PC-3 (cell line): ENCODE measurements at regions of chr2 and their contacts with region 1.

Region 1: DNA sequence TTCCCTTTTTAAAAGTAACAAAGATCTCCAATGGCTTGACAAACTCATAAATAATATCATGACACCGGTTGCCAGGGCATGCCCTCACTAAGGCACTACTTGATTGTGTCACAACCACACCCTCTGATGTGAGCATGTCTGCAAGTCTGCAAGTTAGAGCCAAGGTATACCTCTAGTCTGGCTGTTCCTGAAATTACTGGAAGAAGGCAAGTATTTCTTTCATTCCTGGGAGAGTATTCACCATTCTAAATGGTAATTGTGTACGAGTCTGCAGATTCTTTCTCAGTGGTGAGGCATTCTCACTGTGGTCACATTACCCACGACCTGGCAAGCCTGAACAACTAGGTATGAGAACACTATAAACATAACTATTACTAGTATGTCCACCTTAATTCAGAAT is 25.7 kb upstream of the RNU4ATAC start:
- DNase-seq: peak; percentile 73
- ATAC-seq: peak; percentile 27
- H3K4me3 ChIP-seq: no peak overlapping the region
- H3K27ac ChIP-seq: peak overlapping the region; percentile 23
- H3K4me1 ChIP-seq: peaks cover 46% of the 10 kb centered on the region
- H3K27me3 ChIP-seq: no peaks in the 10 kb centered on the region
- CTCF ChIP-seq: no peak

Region 2: GRCh38 chr2:121400201-121400600 is 104.8 kb before region 1 on chr2:
- CTCF ChIA-PET with region 1: no interaction called
- POLR2A ChIA-PET with region 1: no interaction called
- intact Hi-C with region 1: loop called (anchors 5 kb)
- DNase-seq: no peak
- ATAC-seq: no peak
- H3K4me3 ChIP-seq: no peak overlapping the region
- H3K27ac ChIP-seq: no peak overlapping the region
- H3K4me1 ChIP-seq: no peaks in the 10 kb centered on the region
- H3K27me3 ChIP-seq: no peaks in the 10 kb centered on the region
- CTCF ChIP-seq: no peak

Region 3: GRCh38 chr2:121476684-121477083 is 28.3 kb before region 1 on chr2:
- CTCF ChIA-PET with region 1: no interaction called
- POLR2A ChIA-PET with region 1: no interaction called
- intact Hi-C with region 1: loop called (anchors 2 kb)
- DNase-seq: no peak
- ATAC-seq: no peak
- H3K4me3 ChIP-seq: no peak overlapping the region
- H3K27ac ChIP-seq: no peak overlapping the region
- H3K4me1 ChIP-seq: peaks cover 11% of the 10 kb centered on the region
- H3K27me3 ChIP-seq: no peaks in the 10 kb centered on the region
- CTCF ChIP-seq: no peak

Region 4: GRCh38 chr2:122368576-122369243 is 863.7 kb after region 1 on chr2:
- CTCF ChIA-PET with region 1: no interaction called
- POLR2A ChIA-PET with region 1: no interaction called
- intact Hi-C with region 1: no loop called
- DNase-seq: peak; percentile 8
- ATAC-seq: no peak
- H3K4me3 ChIP-seq: no peak overlapping the region
- H3K27ac ChIP-seq: no peak overlapping the region
- H3K4me1 ChIP-seq: no peaks in the 10 kb centered on the region
- H3K27me3 ChIP-seq: peaks cover 9% of the 10 kb centered on the region
- CTCF ChIP-seq: no peak; the same call in 1 of the 2 replicates